ENCODE measurements at regions of chr4 and their contacts with region 1.

Region 1: GRCh38 chr4:15882675-15883086 is 55.9 kb downstream of the FGFBP1 start:
- DNase-seq: peak; percentile 67
- ATAC-seq: peak; percentile 79
- H3K4me3 Mint-ChIP-seq: no peak overlapping the region
- H3K27ac Mint-ChIP-seq: no peak overlapping the region
- H3K4me1 Mint-ChIP-seq: peaks cover 3% of the 10 kb centered on the region
- H3K27me3 Mint-ChIP-seq: peaks cover 11% of the 10 kb centered on the region

Region 2: GRCh38 chr4:15855804-15856475 is 26.7 kb before region 1 on chr4:
- CTCF ChIA-PET with region 1: interaction called, 13 read pairs
- POLR2A ChIA-PET with region 1: no interaction called
- DNase-seq: no peak
- ATAC-seq: no peak
- H3K4me3 Mint-ChIP-seq: no peak overlapping the region
- H3K27ac Mint-ChIP-seq: peak overlapping the region; percentile 13
- H3K4me1 Mint-ChIP-seq: no peaks in the 10 kb centered on the region
- H3K27me3 Mint-ChIP-seq: peaks cover 9% of the 10 kb centered on the region

Region 3: GRCh38 chr4:15906024-15906443 is 23.4 kb after region 1 on chr4:
- CTCF ChIA-PET with region 1: interaction called, 21 read pairs
- POLR2A ChIA-PET with region 1: no interaction called
- DNase-seq: no peak
- ATAC-seq: no peak
- H3K4me3 Mint-ChIP-seq: no peak overlapping the region
- H3K27ac Mint-ChIP-seq: no peak overlapping the region
- H3K4me1 Mint-ChIP-seq: peaks cover 9% of the 10 kb centered on the region
- H3K27me3 Mint-ChIP-seq: peaks cover 16% of the 10 kb centered on the region

Region 4: DNA sequence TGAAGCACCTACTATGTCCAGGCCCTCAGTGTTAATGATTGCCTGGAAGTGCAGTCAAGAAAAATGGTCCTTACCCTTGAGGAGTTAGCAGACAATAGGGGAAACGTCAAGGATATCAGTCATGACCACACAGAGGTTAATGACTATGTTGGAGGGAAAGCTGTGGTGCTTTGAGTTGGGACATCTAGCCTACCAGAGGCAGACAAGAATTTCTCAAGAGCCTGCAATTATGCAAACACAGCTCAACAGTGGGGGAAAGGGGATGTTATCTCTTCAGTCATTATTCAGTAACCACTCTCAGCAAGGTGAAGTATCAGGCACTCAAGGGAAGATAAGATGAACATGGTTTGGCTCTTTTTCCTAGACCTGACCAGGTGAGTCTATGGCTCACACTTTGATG is 62.8 kb after region 1 on chr4:
- CTCF ChIA-PET with region 1: interaction called, 17 read pairs
- POLR2A ChIA-PET with region 1: no interaction called
- DNase-seq: no peak
- ATAC-seq: no peak
- H3K4me3 Mint-ChIP-seq: no peak overlapping the region
- H3K27ac Mint-ChIP-seq: no peak overlapping the region
- H3K4me1 Mint-ChIP-seq: peaks cover 12% of the 10 kb centered on the region
- H3K27me3 Mint-ChIP-seq: peaks cover 18% of the 10 kb centered on the region

Region 5: GRCh38 chr4:16001484-16001858 is 118.8 kb after region 1 on chr4:
- CTCF ChIA-PET with region 1: interaction called, 98 read pairs
- POLR2A ChIA-PET with region 1: no interaction called
- DNase-seq: peak; percentile 71
- ATAC-seq: peak; percentile 91
- H3K4me3 Mint-ChIP-seq: no peak overlapping the region
- H3K27ac Mint-ChIP-seq: no peak overlapping the region
- H3K4me1 Mint-ChIP-seq: no peaks in the 10 kb centered on the region
- H3K27me3 Mint-ChIP-seq: peaks cover 13% of the 10 kb centered on the region

Measured in activated CD8-positive, alpha-beta T cell treated with anti-CD3 and anti-CD28 coated beads, Interleukin-2, amount 10 ng/mL, durations not matched to agents 7 days and 5 days (primary cell).